ENCODE measurements at regions of chr20 and their contacts with region 1.

Region 1: GRCh38 chr20:37575884-37576283 is 48.2 kb upstream of the BLCAP start:
- DNase-seq: peak; percentile 60

Region 2: GRCh38 chr20:37615340-37616109 is 39.6 kb after region 1 on chr20:
- intact Hi-C with region 1: loop called in 1 of 2 experiments (anchors 2 kb)
- DNase-seq: no peak

Region 3: GRCh38 chr20:38315290-38315966 is 739.5 kb after region 1 on chr20:
- intact Hi-C with region 1: loop called in 1 of 2 experiments (anchors 10 kb)
- DNase-seq: no peak

Measured in posterior vena cava (tissue), 2 donors.